HepG2 (cell line): ENCODE measurements at regions of chr7 and their contacts with region 1.

Region 1: DNA sequence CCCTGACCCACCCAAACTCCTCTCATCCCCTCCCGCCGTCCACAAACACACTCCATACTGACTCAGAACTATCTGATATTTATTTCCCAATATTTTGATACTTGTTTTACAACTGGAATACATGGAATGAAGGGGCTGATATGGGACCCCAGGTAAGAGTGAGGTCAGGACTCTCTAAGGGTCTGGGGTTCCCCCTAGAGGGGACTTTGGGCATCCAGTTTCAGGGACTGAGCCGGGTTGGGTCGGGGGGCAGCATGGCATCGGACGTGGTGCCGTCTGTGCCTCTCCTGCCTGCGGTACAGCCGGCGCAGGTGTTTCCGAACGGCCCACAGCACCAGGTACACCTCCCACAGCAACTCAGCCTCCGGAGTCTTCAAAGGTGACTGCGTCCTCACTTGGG is 7.5 kb downstream of the SPACDR start:
- DNase-seq: no peak
- ATAC-seq: no peak
- H3K4me3 ChIP-seq: no peak overlapping the region
- H3K27ac ChIP-seq: no peak overlapping the region
- H3K4me1 ChIP-seq: peaks cover 21% of the 10 kb centered on the region
- H3K27me3 ChIP-seq: peaks cover 0 to 17% of the 10 kb centered on the region in 2 experiments; a peak in 2 of 5 replicates
- CTCF ChIP-seq: peak; percentile 21
- EP300 ChIP-seq: no peak
- POLR2A ChIP-seq: no peak
- RAD21 ChIP-seq: no peak

Region 2: DNA sequence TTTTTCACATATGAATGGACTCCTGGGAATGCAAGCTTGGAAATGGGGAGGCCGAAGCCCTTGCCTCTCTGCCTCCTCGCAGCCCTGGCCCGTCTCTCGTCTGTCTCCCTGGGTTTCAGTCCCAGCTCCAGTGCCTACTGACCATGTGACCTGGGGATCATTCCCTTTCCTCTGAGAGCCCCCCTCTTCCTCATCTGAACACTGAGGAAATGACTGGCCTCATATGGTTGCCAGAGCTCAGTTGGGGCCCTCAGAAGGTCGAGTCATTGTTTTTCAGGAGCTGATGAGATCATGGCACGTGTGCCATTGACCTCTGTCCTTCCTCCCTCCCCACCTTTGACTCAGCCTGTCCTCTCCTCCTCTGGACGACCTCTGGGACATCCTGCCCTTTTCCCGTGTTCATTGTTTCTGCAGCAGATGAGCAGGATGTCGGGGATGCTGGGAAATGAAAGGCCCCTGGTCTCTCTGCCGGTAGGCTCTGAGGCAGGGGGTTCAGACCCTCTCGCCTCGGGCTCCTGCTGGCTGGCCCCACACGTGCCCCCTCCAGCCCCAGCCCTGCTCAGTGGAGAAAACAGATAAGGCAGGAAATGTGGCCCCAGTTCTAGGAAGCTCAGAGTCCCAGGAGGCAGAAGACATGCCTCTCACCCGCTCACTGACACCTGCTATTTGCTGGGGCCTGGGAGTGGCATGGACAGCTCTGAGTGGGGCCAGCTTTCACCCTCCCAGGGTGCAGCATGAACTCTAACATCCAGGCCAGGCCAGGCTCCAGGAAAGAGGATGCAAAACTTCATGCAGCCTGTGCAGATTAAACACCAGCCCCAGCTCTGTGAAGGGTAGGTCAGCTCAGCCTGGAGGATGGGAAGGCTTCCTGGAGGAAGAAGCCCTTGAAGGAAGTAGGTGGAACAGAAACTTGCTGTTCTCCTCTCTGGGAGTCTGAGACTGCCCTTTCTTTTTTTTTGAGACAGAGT is 12.0 kb before region 1 on chr7:
- CTCF ChIA-PET with region 1: no interaction called
- POLR2A ChIA-PET with region 1: interaction called, 24 read pairs
- in situ Hi-C with region 1: no loop called
- intact Hi-C with region 1: no loop called
- DNase-seq: peak; percentile 96
- ATAC-seq: peak; percentile 85
- H3K4me3 ChIP-seq: peak overlapping the region in 2 of 3 experiments; percentile 27 to 51; a peak in 4 of 6 replicates
- H3K27ac ChIP-seq: peak overlapping the region; percentile 94
- H3K4me1 ChIP-seq: peaks cover 53% of the 10 kb centered on the region
- H3K27me3 ChIP-seq: no peaks in the 10 kb centered on the region
- CTCF ChIP-seq: no peak
- EP300 ChIP-seq: peak in 1 of 2 experiments; percentile 82; a peak in 3 of 4 replicates
- POLR2A ChIP-seq: peak; percentile 53 to 63; a peak in 2 of 4 replicates
- RAD21 ChIP-seq: no peak

Region 3: GRCh38 chr7:101772513-101773211 is 1316.1 kb after region 1 on chr7:
- CTCF ChIA-PET with region 1: no interaction called
- POLR2A ChIA-PET with region 1: no interaction called
- in situ Hi-C with region 1: no loop called
- intact Hi-C with region 1: no loop called
- DNase-seq: no peak
- ATAC-seq: no peak
- H3K4me3 ChIP-seq: no peak overlapping the region
- H3K27ac ChIP-seq: no peak overlapping the region
- H3K4me1 ChIP-seq: no peaks in the 10 kb centered on the region
- H3K27me3 ChIP-seq: peaks cover 4 to 23% of the 10 kb centered on the region in 2 experiments; a peak in 4 of 5 replicates
- CTCF ChIP-seq: no peak
- EP300 ChIP-seq: no peak
- POLR2A ChIP-seq: no peak
- RAD21 ChIP-seq: no peak